Testis (tissue), 5 donors: ENCODE measurements at regions of chr7 and their contacts with region 1.

Region 1: DNA sequence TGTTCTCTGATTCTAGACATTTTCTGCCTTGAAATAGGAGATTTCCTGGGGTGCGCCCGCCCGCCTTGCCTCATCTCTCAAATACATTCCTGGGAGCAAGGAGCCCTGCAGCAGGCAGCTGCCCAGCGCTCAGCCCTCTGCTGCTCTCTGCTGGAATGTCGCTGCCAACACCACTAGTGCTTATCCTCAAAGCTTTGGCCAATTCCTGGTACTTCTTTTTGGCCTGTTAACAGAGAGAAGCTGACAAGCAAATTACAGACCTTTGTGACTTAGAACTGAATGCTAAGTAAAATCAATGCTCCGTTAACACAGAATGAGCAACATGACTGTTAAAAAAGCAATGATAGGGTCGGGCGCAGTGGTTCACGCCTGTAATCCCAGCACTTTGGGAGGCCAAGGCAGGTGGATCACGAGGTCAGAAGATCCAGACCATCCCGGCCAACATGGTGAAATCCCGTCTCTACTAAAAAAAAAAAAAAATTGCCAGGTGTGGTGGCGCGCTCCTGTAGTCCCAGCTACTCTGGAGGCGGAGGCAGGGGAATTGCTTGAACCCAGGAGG is 41.9 kb upstream of the SYPL1 start:
- DNase-seq: peak; percentile 87
- H3K4me3 ChIP-seq: no peak overlapping the region
- H3K27ac ChIP-seq: no peak overlapping the region
- H3K4me1 ChIP-seq: peaks cover 3% of the 10 kb centered on the region
- H3K27me3 ChIP-seq: no peaks in the 10 kb centered on the region
- CTCF ChIP-seq: peak; percentile 83 to 89 (median 87)
- POLR2A ChIP-seq: no peak

Region 2: GRCh38 chr7:105975770-105976422 is 178.1 kb before region 1 on chr7:
- intact Hi-C with region 1: no loop called
- DNase-seq: no peak
- H3K4me3 ChIP-seq: no peak overlapping the region
- H3K27ac ChIP-seq: no peak overlapping the region
- H3K4me1 ChIP-seq: peaks cover 24% of the 10 kb centered on the region
- H3K27me3 ChIP-seq: no peaks in the 10 kb centered on the region
- CTCF ChIP-seq: no peak
- POLR2A ChIP-seq: no peak

Region 3: GRCh38 chr7:106056513-106057203 is 97.3 kb before region 1 on chr7:
- intact Hi-C with region 1: loop called (anchors 5 kb)
- DNase-seq: peak; percentile 83
- H3K4me3 ChIP-seq: no peak overlapping the region
- H3K27ac ChIP-seq: no peak overlapping the region
- H3K4me1 ChIP-seq: no peaks in the 10 kb centered on the region
- H3K27me3 ChIP-seq: no peaks in the 10 kb centered on the region
- CTCF ChIP-seq: peak; percentile 71 to 80 (median 79)
- POLR2A ChIP-seq: no peak

Region 4: DNA sequence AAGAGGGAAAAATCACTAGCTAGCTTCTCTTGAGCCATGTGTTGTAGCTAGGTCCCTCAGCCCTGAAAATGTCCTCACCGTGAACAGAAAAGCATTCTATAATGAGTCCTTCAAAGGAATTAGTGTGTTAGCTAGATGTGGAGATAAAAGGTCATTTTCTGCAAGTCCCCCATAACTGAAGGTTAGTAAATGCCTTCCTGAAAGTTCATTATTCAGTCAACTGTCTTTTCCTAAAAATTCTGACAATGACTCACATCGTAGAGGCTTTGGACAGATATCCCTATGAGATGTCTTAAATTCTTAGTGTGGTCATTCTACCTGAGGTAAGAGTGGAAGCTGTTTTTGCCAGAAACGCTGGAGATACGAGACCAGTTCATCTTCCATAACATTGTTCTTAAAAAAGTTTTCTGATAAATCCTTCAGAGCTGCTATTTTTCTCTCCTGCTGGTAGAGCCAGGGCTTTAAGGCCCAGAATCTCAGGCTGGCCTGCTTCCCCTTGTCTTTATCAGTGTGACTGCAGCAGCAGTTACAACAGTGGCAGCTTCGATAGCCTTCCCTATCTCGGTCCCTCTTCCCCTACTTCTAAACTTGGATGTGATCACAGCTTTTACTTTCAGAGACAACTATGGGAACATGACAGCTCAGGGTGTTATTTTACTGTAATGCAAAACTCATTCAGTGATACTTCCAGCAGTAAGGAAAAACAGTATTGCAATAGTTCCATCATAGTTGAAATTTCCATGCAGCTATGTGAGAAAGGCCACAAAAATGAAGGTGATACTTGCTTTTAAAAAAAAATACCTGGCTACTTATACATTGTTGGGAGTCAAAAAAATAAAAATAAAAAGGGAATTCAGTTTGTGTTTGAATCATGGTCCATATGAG is 853.3 kb after region 1 on chr7:
- intact Hi-C with region 1: no loop called
- DNase-seq: peak; percentile 43
- H3K4me3 ChIP-seq: no peak overlapping the region
- H3K27ac ChIP-seq: peak overlapping the region in 1 of 2 donors; percentile 2
- H3K4me1 ChIP-seq: no peaks in the 10 kb centered on the region
- H3K27me3 ChIP-seq: no peaks in the 10 kb centered on the region
- CTCF ChIP-seq: no peak
- POLR2A ChIP-seq: no peak